ENCODE measurements at regions of chr3 and their contacts with region 1.

Region 1: GRCh38 chr3:46276502-46277099 is 34.3 kb downstream of the CCR3 start:
- DNase-seq: peak; percentile 78 to 85 (median 82)
- ATAC-seq: peak; percentile 96
- H3K4me3 ChIP-seq: no peak overlapping the region
- H3K4me1 ChIP-seq: no peaks in the 10 kb centered on the region
- CTCF ChIP-seq: peak; percentile 79

Region 2: DNA sequence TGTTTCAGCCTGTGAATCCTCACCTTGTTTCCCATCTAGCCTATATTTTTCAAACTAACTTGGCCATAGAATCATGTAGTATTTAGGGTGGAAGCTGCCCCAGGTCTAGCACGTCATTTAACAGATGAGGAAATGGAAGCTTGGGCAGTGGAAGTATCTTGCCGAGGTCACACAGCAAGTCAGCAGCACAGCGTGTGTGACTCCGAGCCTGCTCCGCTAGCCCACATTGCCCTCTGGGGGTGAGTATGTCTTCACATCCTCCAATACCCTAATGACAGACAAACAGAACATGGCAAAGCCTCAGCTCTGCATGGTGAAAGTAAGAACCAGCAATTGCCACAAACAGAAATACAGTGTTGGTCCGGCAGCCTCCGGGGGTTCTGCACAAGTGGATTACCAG is 92.0 kb after region 1 on chr3:
- intact Hi-C with region 1: loop called in 1 of 2 experiments (anchors 10 kb)
- DNase-seq: peak; percentile 57 to 84 (median 63)
- ATAC-seq: peak; percentile 88
- H3K4me3 ChIP-seq: no peak overlapping the region
- H3K4me1 ChIP-seq: no peaks in the 10 kb centered on the region
- CTCF ChIP-seq: no peak

Region 3: DNA sequence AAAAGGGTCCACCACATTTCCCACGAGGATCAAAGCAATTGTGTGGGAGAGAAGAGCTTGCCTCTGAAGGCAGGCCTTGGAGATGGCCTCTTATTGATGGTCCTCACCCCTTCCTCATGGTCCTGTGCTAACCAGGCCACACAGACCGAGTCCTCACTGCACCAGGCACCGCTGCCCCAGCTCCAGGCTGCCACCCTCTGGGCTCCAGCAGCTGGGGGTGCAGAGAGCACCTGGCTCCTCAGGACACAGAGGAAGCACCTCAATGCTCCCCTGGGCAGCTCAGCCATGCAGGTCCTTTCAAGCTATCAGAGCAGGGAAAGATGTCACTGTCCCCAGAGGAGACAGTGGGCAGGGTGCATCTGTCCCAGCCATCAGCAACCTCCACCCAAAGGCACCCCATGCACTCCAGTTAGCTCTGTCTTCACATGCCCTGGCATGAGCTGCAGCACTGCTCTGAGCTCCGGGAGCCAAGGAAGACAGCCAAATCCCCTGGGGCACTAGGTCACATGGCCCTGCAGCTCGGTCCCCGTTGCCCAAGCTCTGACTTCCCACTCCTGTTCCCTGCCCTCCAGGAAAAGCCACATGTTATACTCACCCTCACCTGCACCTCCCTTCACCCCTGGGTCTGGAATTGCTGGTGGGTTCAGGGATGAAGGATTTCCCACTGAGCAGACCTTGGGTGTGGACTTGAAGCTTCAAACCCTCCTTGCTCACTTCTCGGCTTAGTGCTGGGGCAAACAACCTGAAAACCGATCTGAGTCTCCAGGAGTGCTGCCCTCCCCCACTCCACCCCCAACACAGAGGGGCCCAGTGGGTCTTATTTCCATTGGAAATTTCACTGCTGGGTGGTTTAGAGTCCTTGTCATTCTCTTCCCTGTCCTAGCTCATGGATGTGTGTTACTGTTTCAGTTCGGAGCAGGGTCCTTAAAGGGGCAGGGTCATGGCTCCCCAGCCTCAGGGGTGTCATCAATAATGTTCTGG is 384.2 kb after region 1 on chr3:
- intact Hi-C with region 1: no loop called
- DNase-seq: no peak
- ATAC-seq: no peak
- H3K4me3 ChIP-seq: no peak overlapping the region
- H3K4me1 ChIP-seq: no peaks in the 10 kb centered on the region
- CTCF ChIP-seq: no peak

Measured in mucosa of descending colon (tissue), 3 donors.